ENCODE measurements at regions of chr4 and their contacts with region 1.

Region 1: GRCh38 chr4:140195806-140196205 is 41.8 kb upstream of the MAML3 start:
- DNase-seq: no peak
- ATAC-seq: no peak
- H3K4me3 ChIP-seq: no peak overlapping the region
- H3K4me3 Mint-ChIP-seq: no peak overlapping the region
- H3K27ac ChIP-seq: no peak overlapping the region
- H3K27ac Mint-ChIP-seq: no peak overlapping the region
- H3K4me1 ChIP-seq: no peaks in the 10 kb centered on the region
- H3K4me1 Mint-ChIP-seq: no peaks in the 10 kb centered on the region
- H3K27me3 ChIP-seq: peaks cover 0 to 3% of the 10 kb centered on the region in 2 experiments
- H3K27me3 Mint-ChIP-seq: peaks cover 3 to 11% of the 10 kb centered on the region in 2 donors

Region 2: GRCh38 chr4:140472156-140472555 is 276.4 kb after region 1 on chr4:
- CTCF ChIA-PET with region 1: interaction called in 1 of 2 experiments, 13 read pairs
- POLR2A ChIA-PET with region 1: no interaction called
- DNase-seq: no peak
- ATAC-seq: no peak
- H3K4me3 ChIP-seq: no peak overlapping the region
- H3K4me3 Mint-ChIP-seq: no peak overlapping the region
- H3K27ac ChIP-seq: no peak overlapping the region
- H3K27ac Mint-ChIP-seq: no peak overlapping the region
- H3K4me1 ChIP-seq: no peaks in the 10 kb centered on the region
- H3K4me1 Mint-ChIP-seq: no peaks in the 10 kb centered on the region
- H3K27me3 ChIP-seq: peaks cover 0 to 5% of the 10 kb centered on the region in 2 experiments
- H3K27me3 Mint-ChIP-seq: peaks cover 23 to 31% of the 10 kb centered on the region in 2 donors